Activated B cell treated with CpG ODN at 0.5 μM for 24 hours (primary cell): ENCODE measurements at regions of chr12 and their contacts with region 1.

Region 1: DNA sequence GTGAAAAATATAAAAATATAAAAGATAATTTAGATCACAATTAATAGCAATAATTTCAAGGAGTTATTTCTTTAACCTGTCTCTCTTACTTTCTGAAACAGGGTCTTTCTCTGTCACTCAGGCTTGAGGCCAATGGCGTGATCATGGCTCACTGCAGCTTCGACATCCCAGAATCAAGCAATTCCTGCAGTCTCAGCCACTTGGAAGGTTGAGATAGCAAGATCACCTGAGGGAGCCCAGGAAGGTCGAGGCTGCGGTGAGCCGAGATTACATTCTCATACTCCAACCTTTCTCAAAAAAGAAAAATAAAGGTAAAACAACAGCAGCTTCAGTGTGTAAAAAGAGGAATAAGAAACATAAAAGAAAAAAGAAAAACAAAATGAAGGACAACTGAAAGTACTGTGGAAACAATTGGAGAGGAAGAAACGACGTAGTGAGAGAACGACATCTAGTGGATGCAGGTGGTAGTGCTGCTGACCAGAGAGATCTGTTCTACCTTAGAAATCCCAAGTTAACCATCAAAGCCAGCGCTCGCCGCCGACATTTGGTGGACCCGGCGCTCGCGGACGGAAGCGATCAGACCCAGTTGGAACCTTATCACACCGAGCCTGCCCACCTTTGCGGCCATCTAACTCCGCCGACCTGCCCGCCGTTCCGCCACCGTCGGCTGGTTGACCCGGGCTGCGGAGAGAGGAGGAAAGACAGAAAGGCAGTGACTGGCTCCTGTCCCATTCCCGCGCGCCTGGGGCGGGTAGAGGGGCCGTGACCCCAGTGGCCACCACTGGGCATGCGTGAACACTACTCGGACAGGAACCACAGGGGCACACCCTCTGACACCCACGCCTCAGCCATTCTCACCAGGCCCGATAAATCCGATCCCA is 196.1 kb downstream of the ALG10 start:
- DNase-seq: peak; percentile 31
- ATAC-seq: peak; percentile 69
- H3K4me3 Mint-ChIP-seq: peak overlapping the region; percentile 70
- H3K27ac Mint-ChIP-seq: no peak overlapping the region
- H3K4me1 Mint-ChIP-seq: peaks cover 10% of the 10 kb centered on the region
- H3K27me3 Mint-ChIP-seq: peaks cover 2% of the 10 kb centered on the region
- CTCF ChIP-seq: peak; percentile 91

Region 2: GRCh38 chr12:33967760-33968159 is 250.6 kb before region 1 on chr12:
- CTCF ChIA-PET with region 1: no interaction called
- POLR2A ChIA-PET with region 1: no interaction called
- intact Hi-C with region 1: no loop called
- DNase-seq: no peak
- ATAC-seq: no peak
- H3K4me3 Mint-ChIP-seq: no peak overlapping the region
- H3K27ac Mint-ChIP-seq: no peak overlapping the region
- H3K4me1 Mint-ChIP-seq: no peaks in the 10 kb centered on the region
- H3K27me3 Mint-ChIP-seq: no peaks in the 10 kb centered on the region
- CTCF ChIP-seq: no peak

Region 3: GRCh38 chr12:34126239-34126641 is 92.2 kb before region 1 on chr12:
- CTCF ChIA-PET with region 1: interaction called, 6 read pairs
- POLR2A ChIA-PET with region 1: no interaction called
- intact Hi-C with region 1: loop called (anchors 1 kb)
- DNase-seq: no peak
- ATAC-seq: peak; percentile 28
- H3K4me3 Mint-ChIP-seq: peak overlapping the region; percentile 71
- H3K27ac Mint-ChIP-seq: peak overlapping the region; percentile 54
- H3K4me1 Mint-ChIP-seq: peaks cover 17% of the 10 kb centered on the region
- H3K27me3 Mint-ChIP-seq: no peaks in the 10 kb centered on the region
- CTCF ChIP-seq: no peak